Posterior cingulate gyrus (tissue), 11 donors: ENCODE measurements at regions of chr3 and their contacts with region 1.

Region 1: GRCh38 chr3:107794664-107795443 is 272.1 kb downstream of the BBX start:
- DNase-seq: no peak

Region 2: DNA sequence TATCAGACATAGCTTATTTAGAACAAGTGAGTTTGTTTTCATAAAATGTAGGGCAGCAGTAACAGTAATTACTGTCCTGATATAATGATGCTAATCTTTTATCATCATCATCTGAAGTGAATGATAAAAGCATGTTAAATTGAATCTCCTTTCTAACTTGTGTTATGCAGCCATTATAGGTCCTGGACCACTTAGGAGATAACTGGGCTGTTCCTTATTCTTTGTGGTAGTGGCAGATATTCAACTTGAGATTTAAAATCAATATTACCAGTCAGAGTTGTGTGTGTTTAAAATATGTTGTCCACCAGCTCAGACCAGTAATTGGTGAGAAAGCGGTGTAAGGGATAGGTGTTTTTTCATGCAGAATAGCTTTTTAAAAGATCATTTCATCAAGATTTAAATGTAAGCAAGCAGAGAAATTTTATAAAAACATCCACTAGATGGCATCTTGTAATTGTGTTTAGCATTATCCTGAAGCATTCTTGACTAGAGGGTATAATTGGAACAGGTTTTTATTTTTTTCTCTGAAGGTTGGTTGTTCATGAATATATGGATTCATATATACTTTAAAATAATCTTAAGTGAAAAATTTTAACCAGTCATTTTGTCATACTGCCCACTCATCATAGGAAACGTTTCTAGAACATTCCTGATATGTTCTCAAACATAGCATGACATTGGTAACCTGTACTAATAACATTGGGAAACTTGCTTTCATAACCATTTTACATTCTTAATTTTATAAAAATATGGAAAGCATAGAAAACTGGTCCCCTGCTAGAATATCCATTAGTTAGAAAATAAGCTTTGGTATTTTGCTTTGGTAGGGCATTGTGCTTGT is 118.2 kb before region 1 on chr3:
- intact Hi-C with region 1: loop called (anchors 2 kb)
- DNase-seq: no peak